ENCODE measurements at regions of chr6 and their contacts with region 1.

Region 1: GRCh38 chr6:24940311-24940917 is 4.7 kb upstream of the RIPOR2 start:
- DNase-seq: no peak
- ATAC-seq: no peak
- H3K4me3 ChIP-seq: no peak overlapping the region
- H3K4me3 Mint-ChIP-seq: peak overlapping the region; percentile 37
- H3K27ac ChIP-seq: peak overlapping the region; percentile 3 to 68
- H3K27ac Mint-ChIP-seq: peak overlapping the region; percentile 86
- H3K4me1 ChIP-seq: peaks cover 53% of the 10 kb centered on the region
- H3K4me1 Mint-ChIP-seq: peaks cover 64% of the 10 kb centered on the region
- H3K27me3 ChIP-seq: no peaks in the 10 kb centered on the region
- H3K27me3 Mint-ChIP-seq: no peaks in the 10 kb centered on the region
- CTCF ChIP-seq: no peak

Region 2: GRCh38 chr6:24796616-24797290 is 143.7 kb before region 1 on chr6:
- CTCF ChIA-PET with region 1: no interaction called
- POLR2A ChIA-PET with region 1: no interaction called
- intact Hi-C with region 1: no loop called
- DNase-seq: no peak
- ATAC-seq: no peak
- H3K4me3 ChIP-seq: no peak overlapping the region
- H3K4me3 Mint-ChIP-seq: no peak overlapping the region
- H3K27ac ChIP-seq: no peak overlapping the region
- H3K27ac Mint-ChIP-seq: peak overlapping the region; percentile 35
- H3K4me1 ChIP-seq: no peaks in the 10 kb centered on the region
- H3K4me1 Mint-ChIP-seq: peaks cover 10% of the 10 kb centered on the region
- H3K27me3 ChIP-seq: no peaks in the 10 kb centered on the region
- H3K27me3 Mint-ChIP-seq: no peaks in the 10 kb centered on the region
- CTCF ChIP-seq: no peak

Region 3: DNA sequence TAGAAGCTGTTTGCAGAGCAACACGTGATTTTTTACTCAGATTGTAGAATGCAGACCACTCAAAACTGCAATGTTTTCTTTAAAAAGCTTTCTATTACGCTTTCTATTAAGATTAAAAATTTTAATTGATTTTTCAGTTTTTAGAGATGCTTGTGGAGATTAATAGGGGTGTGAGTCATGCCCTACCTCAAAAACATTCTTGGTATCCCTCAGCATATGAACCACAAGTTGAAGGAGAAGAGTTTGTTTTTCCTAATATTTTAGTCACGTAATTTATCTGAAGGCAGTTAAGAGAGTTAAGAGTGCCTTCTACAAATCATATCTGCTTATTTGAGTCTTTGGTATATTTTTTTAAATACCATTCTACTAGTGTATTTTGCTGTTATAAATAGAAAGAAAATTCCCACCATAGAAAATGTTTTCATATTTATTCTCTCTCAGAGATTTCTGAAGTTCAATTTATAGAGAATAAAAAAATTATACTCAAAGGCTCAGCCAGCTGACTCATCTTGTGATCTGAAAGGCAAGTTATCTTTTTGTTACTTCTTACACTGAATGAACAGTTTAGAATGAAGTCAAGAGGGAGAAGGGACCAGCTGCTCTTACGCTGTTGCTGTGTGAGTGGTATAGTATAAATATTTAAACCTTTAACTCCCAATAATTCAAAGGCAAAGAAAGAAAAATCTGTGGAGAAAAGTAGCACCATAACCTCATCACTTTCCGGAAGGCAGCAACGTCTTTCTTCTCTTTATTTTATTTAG is 12.2 kb before region 1 on chr6:
- CTCF ChIA-PET with region 1: interaction called, 94 read pairs
- POLR2A ChIA-PET with region 1: interaction called, 30 read pairs
- intact Hi-C with region 1: loop called in 1 of 2 experiments (anchors 1 kb)
- DNase-seq: peak in 1 of 9 experiments; percentile 51
- ATAC-seq: no peak
- H3K4me3 ChIP-seq: peak overlapping the region; percentile 38 to 89
- H3K4me3 Mint-ChIP-seq: peak overlapping the region; percentile 97
- H3K27ac ChIP-seq: peak overlapping the region; percentile 50 to 73
- H3K27ac Mint-ChIP-seq: peak overlapping the region; percentile 95
- H3K4me1 ChIP-seq: peaks cover 73% of the 10 kb centered on the region
- H3K4me1 Mint-ChIP-seq: peaks cover 82% of the 10 kb centered on the region
- H3K27me3 ChIP-seq: no peaks in the 10 kb centered on the region
- H3K27me3 Mint-ChIP-seq: no peaks in the 10 kb centered on the region
- CTCF ChIP-seq: no peak